ENCODE measurements at regions of chr6 and their contacts with region 1.

Region 1: GRCh38 chr6:66689608-66690007 is 982.6 kb upstream of the EYS start:
- DNase-seq: no peak
- H3K4me3 Mint-ChIP-seq: no peak overlapping the region
- H3K27ac Mint-ChIP-seq: no peak overlapping the region
- H3K4me1 Mint-ChIP-seq: no peaks in the 10 kb centered on the region
- H3K27me3 Mint-ChIP-seq: no peaks in the 10 kb centered on the region

Region 2: GRCh38 chr6:65221153-65221552 is 1468.5 kb before region 1 on chr6:
- intact Hi-C with region 1: loop called (anchors 5 kb)
- DNase-seq: no peak
- H3K4me3 Mint-ChIP-seq: no peak overlapping the region
- H3K27ac Mint-ChIP-seq: no peak overlapping the region
- H3K4me1 Mint-ChIP-seq: no peaks in the 10 kb centered on the region
- H3K27me3 Mint-ChIP-seq: no peaks in the 10 kb centered on the region

Region 3: GRCh38 chr6:67016921-67017460 is 327.4 kb after region 1 on chr6:
- intact Hi-C with region 1: no loop called
- DNase-seq: no peak
- H3K4me3 Mint-ChIP-seq: no peak overlapping the region
- H3K27ac Mint-ChIP-seq: no peak overlapping the region
- H3K4me1 Mint-ChIP-seq: no peaks in the 10 kb centered on the region
- H3K27me3 Mint-ChIP-seq: no peaks in the 10 kb centered on the region

Measured in activated T-helper 1 cell treated with anti-CD3 and anti-CD28 coated beads, Interleukin-12 subunit alpha, Interleukin-12 subunit beta, Interleukin-2, Interleukin-4 antibody, amounts not matched to agents 30 ng/mL and 10 ng/mL and 1 ng/mL, durations not matched to agents 14 hours and 24 hours and 36 hours (primary cell).